RWPE1 (cell line): ENCODE measurements at regions of chr11 and their contacts with region 1.

Region 1: DNA sequence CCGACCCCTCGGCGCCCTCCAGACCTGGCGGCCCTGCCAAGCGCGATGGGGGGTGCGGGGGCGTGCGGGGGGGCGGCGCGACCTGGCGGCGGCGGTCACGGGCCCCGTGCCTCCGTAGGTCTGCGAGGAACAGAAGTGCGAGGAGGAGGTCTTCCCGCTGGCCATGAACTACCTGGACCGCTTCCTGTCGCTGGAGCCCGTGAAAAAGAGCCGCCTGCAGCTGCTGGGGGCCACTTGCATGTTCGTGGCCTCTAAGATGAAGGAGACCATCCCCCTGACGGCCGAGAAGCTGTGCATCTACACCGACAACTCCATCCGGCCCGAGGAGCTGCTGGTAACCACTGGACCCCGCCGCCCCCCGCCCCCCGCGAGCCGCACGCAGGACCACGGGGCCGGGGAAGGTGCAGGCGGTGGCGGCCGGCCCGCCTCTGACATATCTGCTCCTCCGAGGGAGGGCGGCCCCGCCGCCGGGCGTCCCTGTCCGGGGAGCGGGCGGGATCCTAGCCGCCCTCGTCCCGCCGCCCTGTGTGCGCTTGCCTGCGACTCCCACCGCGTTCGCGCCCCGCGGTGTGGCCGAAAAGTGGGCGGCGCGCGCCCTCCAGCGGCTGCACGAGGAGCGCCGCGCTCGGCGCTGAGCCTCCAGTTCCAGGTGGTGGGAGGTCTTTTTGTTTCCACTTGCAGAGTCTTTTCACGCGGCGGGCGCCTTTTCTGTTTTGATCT is 2.1 kb downstream of the CCND1 start:
- DNase-seq: no peak
- H3K27ac ChIP-seq: peak overlapping the region; percentile 87
- CTCF ChIP-seq: peak; percentile 86

Region 2: GRCh38 chr11:69101115-69101791 is 541.8 kb before region 1 on chr11:
- CTCF ChIA-PET with region 1: interaction called, 69 read pairs
- POLR2A ChIA-PET with region 1: no interaction called
- DNase-seq: peak; percentile 87
- H3K27ac ChIP-seq: no peak overlapping the region
- CTCF ChIP-seq: peak; percentile 98

Region 3: DNA sequence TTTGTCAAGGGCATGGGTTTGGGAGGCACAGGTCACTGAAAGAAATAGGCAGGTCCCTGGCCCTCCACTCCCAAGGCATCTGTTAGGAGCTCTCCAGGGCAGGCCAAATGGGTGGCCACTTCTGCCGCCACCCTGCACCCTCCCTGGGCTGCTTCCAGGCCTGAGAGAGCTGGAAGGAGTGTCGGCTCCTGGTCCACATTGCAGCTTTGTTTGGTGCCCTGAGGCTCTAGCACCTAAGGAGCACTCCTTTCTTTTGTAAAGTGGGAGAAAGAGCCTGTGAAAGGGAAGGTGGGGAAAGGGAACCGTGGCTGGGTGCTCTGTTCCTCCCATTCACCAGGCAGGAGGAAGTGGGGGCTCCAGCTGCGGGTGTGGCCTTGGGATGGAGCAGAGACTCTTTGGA is 144.4 kb after region 1 on chr11:
- CTCF ChIA-PET with region 1: no interaction called
- POLR2A ChIA-PET with region 1: no interaction called
- DNase-seq: no peak
- H3K27ac ChIP-seq: no peak overlapping the region
- CTCF ChIP-seq: no peak